Naive thymus-derived CD8-positive, alpha-beta T cell (primary cell): ENCODE measurements at regions of chr11 and their contacts with region 1.

Region 1: GRCh38 chr11:114036156-114036811 is 23.2 kb upstream of the ZBTB16 start:
- DNase-seq: peak; percentile 14 to 76 (median 50)
- ATAC-seq: peak; percentile 73 to 84
- H3K4me3 Mint-ChIP-seq: peak overlapping the region in 6 of 10 donors; percentile 6 to 72 (median 30)
- H3K27ac Mint-ChIP-seq: no peak overlapping the region
- H3K4me1 Mint-ChIP-seq: peaks cover 4 to 11% (median 8%) of the 10 kb centered on the region in 4 donors
- H3K27me3 Mint-ChIP-seq: peaks cover 1 to 13% (median 6%) of the 10 kb centered on the region in 5 donors

Region 2: GRCh38 chr11:113664069-113664980 is 372.0 kb before region 1 on chr11:
- POLR2A ChIA-PET with region 1: no interaction called
- DNase-seq: no peak
- ATAC-seq: no peak
- H3K4me3 Mint-ChIP-seq: no peak overlapping the region
- H3K27ac Mint-ChIP-seq: no peak overlapping the region
- H3K4me1 Mint-ChIP-seq: no peaks in the 10 kb centered on the region
- H3K27me3 Mint-ChIP-seq: peaks cover 0 to 16% (median 5%) of the 10 kb centered on the region in 5 donors

Region 3: GRCh38 chr11:114260483-114260882 is 224.2 kb after region 1 on chr11:
- POLR2A ChIA-PET with region 1: interaction called, 14 read pairs
- DNase-seq: no peak
- ATAC-seq: no peak
- H3K4me3 Mint-ChIP-seq: no peak overlapping the region
- H3K27ac Mint-ChIP-seq: no peak overlapping the region
- H3K4me1 Mint-ChIP-seq: peaks cover 0 to 25% (median 4%) of the 10 kb centered on the region in 4 donors
- H3K27me3 Mint-ChIP-seq: peaks cover 0 to 3% (median 0%) of the 10 kb centered on the region in 5 donors